GM12878 (cell line): ENCODE measurements at regions of chr7 and their contacts with region 1.

Region 1: GRCh38 chr7:4681886-4682620 is at the start of gene FOXK1:
- DNase-seq: no peak
- ATAC-seq: peak; percentile 63
- H3K4me3 ChIP-seq: peak within 1 kb of the TSS; percentile 95
- H3K27ac ChIP-seq: peak within 1 kb of the TSS; percentile 95
- H3K4me1 ChIP-seq: peaks cover 11% of the 10 kb centered on the region
- H3K27me3 ChIP-seq: no peaks in the 10 kb centered on the region
- CTCF ChIP-seq: peak in 1 of 3 experiments; percentile 21; a peak in 2 of 6 replicates
- EP300 ChIP-seq: no peak
- POLR2A ChIP-seq: peak; percentile 71
- RAD21 ChIP-seq: peak; percentile 37; the same call in 1 of the 2 replicates
- polyA plus RNA-seq, gene FOXK1: 0.24 TPM

Region 2: DNA sequence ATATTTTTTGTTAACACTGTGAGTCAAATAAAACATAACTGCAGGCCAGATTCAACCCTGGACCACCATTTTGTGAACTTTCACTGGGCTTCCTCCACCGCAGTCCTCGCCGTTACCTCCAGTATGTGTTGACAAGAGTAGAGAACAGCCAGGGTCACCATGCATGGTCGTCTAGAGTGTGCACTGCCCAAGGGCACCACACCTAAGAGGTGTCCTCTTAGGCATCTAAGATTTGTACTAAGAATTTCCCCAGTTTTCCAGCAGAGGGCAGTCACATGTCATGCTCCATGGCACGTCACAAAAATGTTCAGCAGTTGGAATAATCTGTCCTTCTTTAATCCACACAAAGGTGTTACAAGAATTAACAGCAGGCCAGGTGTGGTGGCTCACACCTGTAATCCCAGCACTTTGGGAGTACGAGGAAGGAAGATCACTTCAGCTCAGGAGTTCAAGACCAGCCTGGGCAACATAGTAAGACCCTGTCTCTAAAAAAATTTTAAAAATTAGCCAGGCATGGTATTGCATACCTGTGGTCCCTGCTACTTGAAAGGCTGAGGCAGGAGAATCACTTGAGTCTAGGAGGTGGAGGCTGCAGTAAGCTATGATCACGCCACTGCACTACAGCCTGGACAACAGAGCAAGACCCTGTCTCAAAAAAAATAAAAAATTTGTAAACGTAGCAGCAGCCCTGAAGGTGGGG is 71.1 kb before region 1 on chr7:
- CTCF ChIA-PET with region 1: no interaction called
- POLR2A ChIA-PET with region 1: no interaction called
- RAD21 ChIA-PET with region 1: no interaction called
- SMC1A ChIA-PET with region 1: no interaction called
- in situ Hi-C with region 1: no loop called
- intact Hi-C with region 1: loop called (anchors 2 kb)
- DNase-seq: peak; percentile 39
- ATAC-seq: peak; percentile 91
- H3K4me3 ChIP-seq: no peak overlapping the region
- H3K27ac ChIP-seq: no peak overlapping the region
- H3K4me1 ChIP-seq: peaks cover 7% of the 10 kb centered on the region
- H3K27me3 ChIP-seq: no peaks in the 10 kb centered on the region; a peak in 1 of 4 replicates
- CTCF ChIP-seq: peak; percentile 77 to 85 (median 78)
- EP300 ChIP-seq: no peak
- POLR2A ChIP-seq: no peak
- RAD21 ChIP-seq: peak; percentile 92

Region 3: DNA sequence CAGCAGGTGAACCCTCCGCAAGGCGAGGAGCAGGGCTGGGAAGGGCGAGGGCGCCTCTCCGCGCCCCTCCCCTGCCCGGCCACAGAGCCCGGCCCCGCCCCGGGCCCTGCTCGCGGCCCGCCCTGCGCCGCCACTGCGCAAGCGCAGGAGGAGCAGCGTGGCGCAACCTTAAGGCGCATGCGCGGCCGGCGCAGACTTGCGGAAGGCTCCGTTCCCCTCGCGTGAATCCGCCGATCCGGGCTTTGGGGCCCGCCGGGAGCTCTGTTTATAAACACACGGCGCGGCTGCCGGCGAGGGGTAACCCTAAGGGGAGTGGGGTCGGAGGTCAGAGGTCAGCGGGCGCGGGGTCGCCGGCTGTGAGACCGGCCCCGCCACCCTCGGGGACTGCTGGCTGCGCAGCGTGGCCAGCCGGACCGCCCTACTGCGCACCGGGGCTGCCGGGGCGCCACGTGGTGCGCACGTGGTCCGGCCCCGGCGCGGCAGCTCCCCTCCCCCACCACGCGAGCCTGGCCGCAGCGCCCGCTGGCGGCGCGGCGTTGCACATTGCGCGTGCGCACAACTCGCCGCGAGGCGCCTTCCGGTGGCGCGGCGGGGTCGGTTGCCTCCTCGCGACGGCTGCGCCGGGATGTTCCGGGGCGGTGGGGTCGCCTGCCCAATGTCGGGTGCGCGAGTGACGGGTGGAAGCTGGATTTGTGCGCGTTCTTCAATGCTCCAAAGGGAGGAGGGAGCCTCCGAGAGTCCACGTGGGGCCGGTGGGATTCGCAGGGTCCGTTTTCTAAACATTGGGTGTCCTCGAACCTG is 40.2 kb before region 1 on chr7:
- CTCF ChIA-PET with region 1: interaction called, 5 read pairs
- POLR2A ChIA-PET with region 1: interaction called, 24 read pairs
- RAD21 ChIA-PET with region 1: interaction called, 14 read pairs
- SMC1A ChIA-PET with region 1: interaction called, 4 read pairs
- in situ Hi-C with region 1: loop called (anchors 5 kb)
- intact Hi-C with region 1: loop called (anchors 1 kb)
- DNase-seq: peak; percentile 65
- ATAC-seq: peak; percentile 97
- H3K4me3 ChIP-seq: peak overlapping the region; percentile 90
- H3K27ac ChIP-seq: peak overlapping the region; percentile 80
- H3K4me1 ChIP-seq: 0 out of 2 replicates have a peak, but pooled peaks cover 3% of the 10 kb centered on the region
- H3K27me3 ChIP-seq: no peaks in the 10 kb centered on the region
- CTCF ChIP-seq: peak; percentile 21 to 70 (median 50); a peak in 4 of 6 replicates
- EP300 ChIP-seq: no peak
- POLR2A ChIP-seq: peak; percentile 96
- RAD21 ChIP-seq: no peak

Region 4: GRCh38 chr7:4725014-4725849 is 43.2 kb after region 1 on chr7:
- CTCF ChIA-PET with region 1: interaction called, 6 read pairs
- POLR2A ChIA-PET with region 1: interaction called, 15 read pairs
- RAD21 ChIA-PET with region 1: interaction called, 8 read pairs
- SMC1A ChIA-PET with region 1: interaction called, 4 read pairs
- in situ Hi-C with region 1: no loop called
- intact Hi-C with region 1: loop called (anchors 1 kb)
- DNase-seq: no peak
- ATAC-seq: peak; percentile 91
- H3K4me3 ChIP-seq: peak overlapping the region; percentile 78
- H3K27ac ChIP-seq: peak overlapping the region; percentile 74
- H3K4me1 ChIP-seq: peaks cover 30% of the 10 kb centered on the region
- H3K27me3 ChIP-seq: no peaks in the 10 kb centered on the region
- CTCF ChIP-seq: no peak
- EP300 ChIP-seq: no peak
- POLR2A ChIP-seq: peak; percentile 72
- RAD21 ChIP-seq: 0 out of 2 replicates have a peak, but pooled peaks have one; percentile 0

Region 5: GRCh38 chr7:4744391-4745264 is 62.6 kb after region 1 on chr7:
- CTCF ChIA-PET with region 1: interaction called, 3 read pairs
- POLR2A ChIA-PET with region 1: interaction called, 4 read pairs
- RAD21 ChIA-PET with region 1: interaction called, 5 read pairs
- SMC1A ChIA-PET with region 1: interaction called, 4 read pairs
- in situ Hi-C with region 1: no loop called
- intact Hi-C with region 1: loop called (anchors 2 kb)
- DNase-seq: peak; percentile 58
- ATAC-seq: peak; percentile 95
- H3K4me3 ChIP-seq: peak overlapping the region; percentile 69; the same call in 1 of the 2 replicates
- H3K27ac ChIP-seq: peak overlapping the region; percentile 90
- H3K4me1 ChIP-seq: peaks cover 29% of the 10 kb centered on the region
- H3K27me3 ChIP-seq: no peaks in the 10 kb centered on the region
- CTCF ChIP-seq: no peak
- EP300 ChIP-seq: no peak
- POLR2A ChIP-seq: peak; percentile 71
- RAD21 ChIP-seq: no peak